Activated CD4-positive, alpha-beta memory T cell treated with anti-CD3 and anti-CD28 coated beads for 36 hours (primary cell): ENCODE measurements at regions of chr2 and their contacts with region 1.

Region 1: GRCh38 chr2:236545814-236546480 is 23.7 kb upstream of the ACKR3 start:
- DNase-seq: peak; percentile 44
- H3K4me3 Mint-ChIP-seq: peak overlapping the region; percentile 65
- H3K27ac Mint-ChIP-seq: peak overlapping the region; percentile 81
- H3K4me1 Mint-ChIP-seq: peaks cover 81% of the 10 kb centered on the region
- H3K27me3 Mint-ChIP-seq: no peaks in the 10 kb centered on the region

Region 2: DNA sequence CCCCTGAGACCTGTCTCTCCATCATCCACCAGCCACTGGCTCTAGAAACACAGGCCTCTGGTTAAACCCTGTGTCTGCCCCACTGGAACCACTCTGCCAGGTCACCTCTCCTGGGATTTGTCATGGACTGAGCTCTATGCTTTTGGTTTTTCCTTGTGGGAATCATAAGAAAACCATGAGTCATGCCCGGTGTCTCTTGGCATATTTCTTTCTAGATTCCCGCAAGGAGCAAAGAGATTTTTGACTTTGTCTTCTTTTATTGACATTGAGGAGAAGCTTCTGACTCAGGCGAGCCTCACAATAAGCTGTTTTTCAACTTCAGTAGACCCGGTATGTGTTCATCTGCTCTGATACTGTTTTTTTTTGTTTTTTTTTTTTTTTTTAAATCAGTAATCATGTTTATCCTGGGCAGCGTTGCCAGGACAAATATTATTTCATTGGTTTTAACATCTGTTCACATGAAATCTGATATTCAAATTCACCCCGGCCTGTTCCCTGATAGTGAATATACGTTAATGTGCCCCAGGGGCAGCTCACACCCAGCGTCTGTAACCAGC is 230.8 kb after region 1 on chr2:
- CTCF ChIA-PET with region 1: no interaction called
- POLR2A ChIA-PET with region 1: no interaction called
- intact Hi-C with region 1: no loop called
- DNase-seq: no peak
- H3K4me3 Mint-ChIP-seq: no peak overlapping the region
- H3K27ac Mint-ChIP-seq: no peak overlapping the region
- H3K4me1 Mint-ChIP-seq: no peaks in the 10 kb centered on the region
- H3K27me3 Mint-ChIP-seq: peaks cover 2% of the 10 kb centered on the region

Region 3: DNA sequence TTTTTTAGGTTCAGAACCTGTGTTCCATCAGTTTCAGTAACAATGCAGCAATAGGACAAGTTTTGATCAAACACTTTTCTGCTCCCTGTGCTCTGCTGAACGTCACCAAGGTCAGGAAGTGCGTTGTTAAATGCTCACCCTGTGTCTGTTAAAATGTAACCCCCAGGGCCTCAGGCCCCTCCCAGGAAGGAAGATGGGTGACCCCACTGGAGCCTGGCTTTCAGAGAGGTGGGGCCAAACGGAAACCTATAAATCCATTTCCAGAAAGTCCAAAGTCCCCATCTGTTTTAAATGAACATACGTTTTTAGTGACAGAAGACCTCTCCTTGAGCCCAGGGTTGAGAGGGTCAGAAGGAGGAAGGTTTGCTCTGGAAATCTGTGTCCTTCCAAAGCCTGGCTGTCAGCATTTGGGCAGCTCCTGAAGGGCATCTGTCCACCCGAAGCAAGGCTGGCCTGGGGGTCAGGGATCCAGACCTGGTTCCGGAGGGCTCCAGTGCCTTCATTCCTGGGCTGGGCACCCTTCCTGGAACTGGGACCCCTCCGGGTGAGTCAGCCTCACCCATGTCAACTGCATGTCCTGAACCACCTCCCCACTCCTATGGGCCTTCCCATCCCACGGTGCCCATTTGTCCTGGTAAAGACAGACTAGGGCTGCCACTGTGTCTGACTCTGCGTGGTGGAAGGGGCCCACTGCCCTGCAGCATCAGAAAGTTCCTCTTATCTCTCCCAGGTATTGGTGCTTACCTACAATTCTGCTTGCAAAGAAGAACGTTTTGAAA is 422.3 kb after region 1 on chr2:
- CTCF ChIA-PET with region 1: no interaction called
- POLR2A ChIA-PET with region 1: no interaction called
- intact Hi-C with region 1: loop called (anchors 10 kb)
- DNase-seq: peak; percentile 35
- H3K4me3 Mint-ChIP-seq: no peak overlapping the region
- H3K27ac Mint-ChIP-seq: peak overlapping the region; percentile 49
- H3K4me1 Mint-ChIP-seq: peaks cover 40% of the 10 kb centered on the region
- H3K27me3 Mint-ChIP-seq: no peaks in the 10 kb centered on the region

Region 4: GRCh38 chr2:237085248-237086221 is 539.6 kb after region 1 on chr2 and contains the start of gene COPS8:
- CTCF ChIA-PET with region 1: no interaction called
- POLR2A ChIA-PET with region 1: no interaction called
- intact Hi-C with region 1: loop called (anchors 10 kb)
- DNase-seq: peak; percentile 94
- H3K4me3 Mint-ChIP-seq: peak within 1 kb of the TSS; percentile 98
- H3K27ac Mint-ChIP-seq: peak within 1 kb of the TSS; percentile 92
- H3K4me1 Mint-ChIP-seq: peaks cover 13% of the 10 kb centered on the region
- H3K27me3 Mint-ChIP-seq: no peaks in the 10 kb centered on the region
- total RNA-seq, gene COPS8: 61.1 to 66.8 TPM